Lower leg skin (tissue), 4 donors: ENCODE measurements at regions of chr9 and their contacts with region 1.

Region 1: GRCh38 chr9:85185486-85186217 is 516.1 kb downstream of the NTRK2 start:
- DNase-seq: no peak
- H3K4me3 ChIP-seq: no peak overlapping the region
- CTCF ChIP-seq: no peak
- POLR2A ChIP-seq: no peak

Region 2: GRCh38 chr9:85155352-85155751 is 30.3 kb before region 1 on chr9:
- intact Hi-C with region 1: loop called (anchors 1 kb)
- DNase-seq: no peak
- H3K4me3 ChIP-seq: no peak overlapping the region
- CTCF ChIP-seq: no peak
- POLR2A ChIP-seq: no peak